A549 (cell line): ENCODE measurements at regions of chr9 and their contacts with region 1.

Region 1: GRCh38 chr9:92669890-92670708 is at the start of gene IPPK:
- DNase-seq: peak; percentile 98 to 99
- ATAC-seq: peak; percentile 94 to 96
- H3K4me3 ChIP-seq: peak within 1 kb of the TSS; percentile 76
- H3K27ac ChIP-seq: peak within 1 kb of the TSS; percentile 91 to 93
- H3K4me1 ChIP-seq: peaks cover 15% of the 10 kb centered on the region
- CTCF ChIP-seq: no peak
- EP300 ChIP-seq: no peak
- POLR2A ChIP-seq: peak; percentile 76
- RAD21 ChIP-seq: no peak
- polyA plus RNA-seq, gene IPPK: 20.0 and 22.7 TPM in 2 replicates

Region 2: DNA sequence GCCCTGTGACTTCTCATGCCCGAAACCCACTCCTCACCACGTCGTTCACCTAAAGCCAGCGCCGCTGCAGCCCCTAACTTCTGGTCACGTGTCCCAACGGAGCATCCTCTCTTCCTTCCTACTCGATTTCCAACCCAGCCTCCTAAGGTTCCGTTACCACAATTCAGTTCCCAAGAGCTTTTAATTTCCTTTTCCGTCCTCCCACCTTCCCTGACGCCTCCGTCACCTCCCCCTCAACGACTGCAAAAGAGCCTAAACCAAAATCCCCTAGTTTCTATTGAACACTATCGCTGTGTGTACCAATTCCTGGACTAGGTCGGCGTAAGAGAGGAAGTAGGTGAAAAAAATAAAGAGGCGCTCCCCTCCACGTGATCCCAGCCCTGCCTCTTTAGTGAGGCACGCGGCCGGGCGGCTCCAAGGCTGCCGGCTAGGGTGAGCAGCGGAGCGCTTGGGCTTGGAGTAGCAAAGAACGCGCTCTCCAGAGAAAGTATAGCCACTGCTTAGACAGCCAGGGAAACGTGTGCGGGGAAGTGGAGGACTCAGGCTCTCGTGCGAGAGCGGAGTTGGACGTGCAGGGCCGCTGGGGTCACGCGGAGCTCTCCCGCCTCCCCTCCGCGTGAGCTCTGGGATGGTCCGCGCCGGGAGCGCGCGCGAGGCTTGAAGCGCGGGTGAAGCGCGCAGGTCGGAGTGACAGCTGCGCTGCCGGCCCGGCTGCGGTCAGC is 344.7 kb before region 1 on chr9 and contains the starts of genes CENPP and NOL8:
- CTCF ChIA-PET with region 1: no interaction called
- POLR2A ChIA-PET with region 1: interaction called, 10 read pairs
- DNase-seq: peak; percentile 89 to 91
- ATAC-seq: peak; percentile 96
- H3K4me3 ChIP-seq: peak within 1 kb of the TSS; percentile 60
- H3K27ac ChIP-seq: peak within 1 kb of the TSS; percentile 98 to 99
- H3K4me1 ChIP-seq: peaks cover 17% of the 10 kb centered on the region
- CTCF ChIP-seq: no peak
- EP300 ChIP-seq: no peak
- POLR2A ChIP-seq: peak; percentile 81
- RAD21 ChIP-seq: no peak
- polyA plus RNA-seq, gene CENPP: 13.4 and 15.5 TPM in 2 replicates
- polyA plus RNA-seq, gene NOL8: 30.2 and 47.2 TPM in 2 replicates

Region 3: DNA sequence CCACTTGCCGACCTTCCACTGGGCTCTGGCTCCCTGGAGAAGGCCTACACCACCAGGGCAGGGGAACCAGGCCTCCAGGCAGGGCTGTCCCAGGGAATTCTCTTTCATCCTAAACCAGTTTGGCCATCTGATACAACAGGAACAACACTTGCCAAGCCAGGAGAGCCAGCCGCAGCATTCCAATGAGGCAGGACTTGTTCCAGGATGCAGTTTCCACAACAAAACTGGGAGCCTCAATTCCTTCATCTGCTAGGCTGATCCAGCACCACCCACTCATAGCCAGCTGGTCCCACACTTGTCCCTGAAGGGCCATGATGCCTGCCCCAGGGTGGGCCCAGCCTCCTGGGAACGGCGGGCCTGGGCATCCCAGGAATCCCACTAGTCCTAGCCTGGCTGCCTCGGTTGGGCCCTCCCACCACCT is 68.6 kb after region 1 on chr9:
- CTCF ChIA-PET with region 1: no interaction called
- POLR2A ChIA-PET with region 1: no interaction called
- DNase-seq: no peak
- ATAC-seq: no peak
- H3K4me3 ChIP-seq: no peak overlapping the region
- H3K27ac ChIP-seq: no peak overlapping the region
- H3K4me1 ChIP-seq: no peaks in the 10 kb centered on the region
- CTCF ChIP-seq: no peak
- EP300 ChIP-seq: no peak
- POLR2A ChIP-seq: no peak
- RAD21 ChIP-seq: no peak

Region 4: GRCh38 chr9:92764988-92765936 is 95.2 kb after region 1 on chr9:
- CTCF ChIA-PET with region 1: interaction called, 5 read pairs
- POLR2A ChIA-PET with region 1: interaction called, 12 read pairs
- DNase-seq: peak; percentile 96 to 97
- ATAC-seq: peak; percentile 95 to 96
- H3K4me3 ChIP-seq: peak overlapping the region; percentile 90
- H3K27ac ChIP-seq: peak overlapping the region; percentile 99
- H3K4me1 ChIP-seq: peaks cover 18% of the 10 kb centered on the region
- CTCF ChIP-seq: peak; percentile 91
- EP300 ChIP-seq: no peak
- POLR2A ChIP-seq: peak; percentile 72
- RAD21 ChIP-seq: peak; percentile 45 to 52; a peak in 4 of 5 replicates